Activated CD8-positive, alpha-beta T cell treated with anti-CD3 and anti-CD28 coated beads for 36 hours (primary cell): ENCODE measurements at regions of chr1 and their contacts with region 1.

Region 1: DNA sequence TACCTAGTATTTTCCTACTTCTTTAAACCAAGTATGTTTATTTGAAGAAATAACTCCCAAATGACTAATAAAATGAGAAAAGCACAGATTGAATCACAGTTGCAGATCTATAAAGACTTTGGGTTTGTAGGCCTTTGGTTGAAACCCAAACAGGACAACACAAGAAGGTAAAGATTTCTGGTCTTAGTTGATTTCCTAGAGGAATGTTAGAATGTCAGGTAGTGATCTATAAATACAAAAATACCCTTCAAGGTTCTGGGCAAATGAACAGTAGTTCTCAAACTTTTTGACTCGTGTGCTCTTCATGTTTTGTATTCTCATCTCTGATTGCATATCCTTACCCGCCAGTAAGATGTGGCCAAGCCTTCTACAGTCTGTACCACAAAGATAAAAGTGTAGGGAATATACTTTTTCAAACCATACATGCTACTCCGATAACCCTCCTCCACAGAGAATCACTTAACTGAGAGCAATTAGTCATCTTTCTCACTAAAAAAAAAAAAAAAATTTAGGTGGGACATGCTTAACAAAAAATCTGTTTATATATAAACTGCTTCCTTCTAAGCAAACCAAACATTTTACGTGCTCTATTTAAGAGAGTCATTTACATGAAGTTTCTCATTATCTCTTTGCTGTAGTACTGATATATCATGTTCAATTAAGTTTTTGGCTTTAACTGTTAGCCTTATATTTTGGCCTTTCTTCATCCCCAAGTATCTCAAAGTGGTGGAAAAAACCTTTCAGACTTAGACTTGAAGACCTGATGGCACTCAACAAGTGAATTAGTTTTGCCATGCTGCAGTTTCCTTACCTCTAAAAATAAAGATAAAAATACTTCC is 36.0 kb downstream of the CNIH4 start:
- DNase-seq: no peak
- ATAC-seq: peak; percentile 83
- H3K4me3 Mint-ChIP-seq: no peak overlapping the region
- H3K27ac Mint-ChIP-seq: peak overlapping the region; percentile 75
- H3K4me1 Mint-ChIP-seq: peaks cover 38% of the 10 kb centered on the region
- H3K27me3 Mint-ChIP-seq: no peaks in the 10 kb centered on the region
- CTCF ChIP-seq: no peak

Region 2: GRCh38 chr1:224266105-224266935 is 126.3 kb before region 1 on chr1:
- CTCF ChIA-PET with region 1: no interaction called
- POLR2A ChIA-PET with region 1: no interaction called
- intact Hi-C with region 1: no loop called
- DNase-seq: no peak
- ATAC-seq: no peak
- H3K4me3 Mint-ChIP-seq: no peak overlapping the region
- H3K27ac Mint-ChIP-seq: peak overlapping the region; percentile 40
- H3K4me1 Mint-ChIP-seq: peaks cover 16% of the 10 kb centered on the region
- H3K27me3 Mint-ChIP-seq: no peaks in the 10 kb centered on the region
- CTCF ChIP-seq: no peak

Region 3: DNA sequence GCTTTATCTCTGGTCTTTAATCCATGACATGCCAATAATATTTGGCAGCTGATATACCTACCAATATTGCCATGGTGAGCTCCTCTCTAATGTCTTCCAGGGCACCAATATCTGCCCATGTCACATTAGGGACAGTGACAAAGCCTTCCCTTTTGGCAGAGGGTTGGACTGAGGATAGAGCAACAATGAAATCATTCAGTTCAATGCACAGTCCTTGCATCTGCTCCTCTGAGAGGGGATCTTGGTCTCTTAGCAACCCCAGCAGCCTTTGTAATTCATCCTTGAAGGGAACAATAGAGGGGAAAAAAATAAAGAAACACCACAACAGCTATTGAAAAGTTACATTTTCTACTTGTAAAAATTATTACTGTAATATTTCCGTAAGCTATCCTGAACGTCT is 104.9 kb before region 1 on chr1:
- CTCF ChIA-PET with region 1: no interaction called
- POLR2A ChIA-PET with region 1: no interaction called
- intact Hi-C with region 1: no loop called
- DNase-seq: no peak
- ATAC-seq: no peak
- H3K4me3 Mint-ChIP-seq: no peak overlapping the region
- H3K27ac Mint-ChIP-seq: no peak overlapping the region
- H3K4me1 Mint-ChIP-seq: no peaks in the 10 kb centered on the region
- H3K27me3 Mint-ChIP-seq: no peaks in the 10 kb centered on the region
- CTCF ChIP-seq: no peak

Region 4: DNA sequence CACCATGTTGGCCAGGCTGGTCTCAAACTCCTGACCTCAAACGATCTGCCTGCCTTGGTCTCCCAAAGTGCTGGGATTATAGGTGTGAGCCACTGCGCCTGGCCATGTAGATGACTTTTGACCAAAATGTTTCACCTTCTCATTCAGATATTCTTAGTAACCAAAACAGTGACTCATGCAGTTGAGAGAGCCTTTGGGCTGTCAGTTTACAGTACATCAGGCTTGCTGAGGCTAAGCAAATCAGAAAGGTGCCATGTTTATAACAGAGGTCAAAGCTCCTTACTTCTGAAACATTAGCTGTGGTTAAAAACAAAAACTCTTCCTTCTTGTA is 15.0 kb before region 1 on chr1:
- CTCF ChIA-PET with region 1: interaction called, 9 read pairs
- POLR2A ChIA-PET with region 1: interaction called, 10 read pairs
- intact Hi-C with region 1: no loop called
- DNase-seq: peak; percentile 71
- ATAC-seq: peak; percentile 65
- H3K4me3 Mint-ChIP-seq: no peak overlapping the region
- H3K27ac Mint-ChIP-seq: peak overlapping the region; percentile 75
- H3K4me1 Mint-ChIP-seq: peaks cover 92% of the 10 kb centered on the region
- H3K27me3 Mint-ChIP-seq: no peaks in the 10 kb centered on the region
- CTCF ChIP-seq: no peak